ENCODE measurements at regions of chr19 and their contacts with region 1.

Region 1: DNA sequence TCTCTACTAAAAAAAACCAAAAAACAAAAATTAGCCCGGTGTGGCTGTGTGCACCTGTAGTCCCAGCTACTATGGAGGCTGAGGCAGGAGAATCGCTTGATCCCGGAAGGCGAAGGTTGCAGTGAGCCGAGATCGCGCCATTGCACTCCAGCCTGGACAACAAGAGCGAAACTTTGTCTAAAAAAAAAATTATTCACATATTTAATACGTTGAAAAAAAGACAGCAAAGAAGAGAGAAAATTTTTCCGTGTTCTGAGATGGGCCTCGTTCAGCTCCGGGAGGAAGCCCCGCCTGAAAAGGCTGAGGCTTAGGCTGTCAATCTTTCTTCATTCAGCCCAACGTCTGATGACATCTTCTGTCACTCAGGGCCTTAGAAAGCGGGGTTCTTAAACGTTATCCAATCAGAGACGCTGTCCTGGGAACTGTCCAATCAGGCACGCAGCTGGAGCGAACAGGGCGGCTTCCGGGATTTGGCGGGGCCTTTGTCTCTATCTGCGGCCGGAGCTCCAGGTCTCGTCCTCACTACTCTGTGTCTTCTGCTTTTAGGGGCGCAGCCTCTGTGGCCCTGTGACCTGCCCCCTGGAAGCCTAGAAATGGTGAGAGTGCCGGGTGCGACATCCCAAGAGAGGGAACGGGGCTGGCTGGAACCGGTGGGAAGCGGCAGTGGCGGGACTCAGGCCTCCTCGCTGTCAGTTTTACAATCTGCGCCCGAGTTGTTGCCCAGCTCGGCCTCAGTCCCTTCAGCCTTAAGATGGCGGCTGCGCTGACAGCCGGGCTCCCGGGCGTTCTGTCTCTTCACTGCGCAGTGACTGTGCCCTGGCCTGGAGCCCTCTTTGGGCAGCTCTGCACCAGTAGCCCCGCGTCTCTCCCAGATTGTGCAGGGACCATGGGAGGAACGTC is at the start of gene ZNF726:
- DNase-seq: peak; percentile 93
- H3K4me3 Mint-ChIP-seq: peak within 1 kb of the TSS; percentile 95
- H3K27ac Mint-ChIP-seq: peak within 1 kb of the TSS; percentile 91
- H3K4me1 Mint-ChIP-seq: peaks cover 18% of the 10 kb centered on the region
- H3K27me3 Mint-ChIP-seq: no peaks in the 10 kb centered on the region
- total RNA-seq, gene ZNF726: 15.9 to 17.3 TPM

Region 2: GRCh38 chr19:22052644-22053013 is 1862.0 kb before region 1 on chr19:
- CTCF ChIA-PET with region 1: no interaction called
- POLR2A ChIA-PET with region 1: no interaction called
- intact Hi-C with region 1: loop called (anchors 5 kb)
- DNase-seq: peak; percentile 43
- H3K4me3 Mint-ChIP-seq: peak overlapping the region; percentile 95
- H3K27ac Mint-ChIP-seq: peak overlapping the region; percentile 88
- H3K4me1 Mint-ChIP-seq: peaks cover 4% of the 10 kb centered on the region
- H3K27me3 Mint-ChIP-seq: no peaks in the 10 kb centered on the region

Region 3: GRCh38 chr19:23686621-23687423 is 227.8 kb before region 1 on chr19 and contains the start of gene ZNF675:
- CTCF ChIA-PET with region 1: interaction called, 4 read pairs
- POLR2A ChIA-PET with region 1: interaction called, 8 read pairs
- intact Hi-C with region 1: loop called (anchors 2 kb)
- DNase-seq: peak; percentile 93
- H3K4me3 Mint-ChIP-seq: peak within 1 kb of the TSS; percentile 97
- H3K27ac Mint-ChIP-seq: peak within 1 kb of the TSS; percentile 97
- H3K4me1 Mint-ChIP-seq: peaks cover 38% of the 10 kb centered on the region
- H3K27me3 Mint-ChIP-seq: no peaks in the 10 kb centered on the region
- total RNA-seq, gene ZNF675: 17.1 to 21.0 TPM

Region 4: DNA sequence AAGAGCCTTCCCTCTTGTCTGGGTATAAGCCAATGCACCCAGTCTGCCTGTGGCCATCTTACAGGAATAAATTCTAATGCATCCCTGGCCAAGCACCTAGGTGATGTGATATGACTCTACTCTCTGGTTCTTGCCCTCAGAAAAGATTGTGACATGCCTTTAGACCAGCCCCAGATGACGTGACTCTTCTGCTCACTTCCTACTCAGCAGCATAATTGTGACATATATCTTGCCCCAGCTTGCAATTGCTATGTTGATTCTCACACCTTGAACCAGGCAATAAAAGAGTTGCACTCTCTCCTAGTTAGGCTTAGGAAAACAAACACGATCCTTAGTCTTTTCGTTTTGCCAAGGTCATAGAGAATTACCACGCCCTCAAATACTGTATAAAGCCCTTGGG is 13.3 kb before region 1 on chr19:
- CTCF ChIA-PET with region 1: no interaction called
- POLR2A ChIA-PET with region 1: no interaction called
- intact Hi-C with region 1: no loop called
- DNase-seq: no peak
- H3K4me3 Mint-ChIP-seq: no peak overlapping the region
- H3K27ac Mint-ChIP-seq: no peak overlapping the region
- H3K4me1 Mint-ChIP-seq: no peaks in the 10 kb centered on the region
- H3K27me3 Mint-ChIP-seq: no peaks in the 10 kb centered on the region